ENCODE measurements at regions of chr7 and their contacts with region 1.

Region 1: GRCh38 chr7:7542251-7542835 is 6.7 kb upstream of the COL28A1 start:
- DNase-seq: no peak

Region 2: DNA sequence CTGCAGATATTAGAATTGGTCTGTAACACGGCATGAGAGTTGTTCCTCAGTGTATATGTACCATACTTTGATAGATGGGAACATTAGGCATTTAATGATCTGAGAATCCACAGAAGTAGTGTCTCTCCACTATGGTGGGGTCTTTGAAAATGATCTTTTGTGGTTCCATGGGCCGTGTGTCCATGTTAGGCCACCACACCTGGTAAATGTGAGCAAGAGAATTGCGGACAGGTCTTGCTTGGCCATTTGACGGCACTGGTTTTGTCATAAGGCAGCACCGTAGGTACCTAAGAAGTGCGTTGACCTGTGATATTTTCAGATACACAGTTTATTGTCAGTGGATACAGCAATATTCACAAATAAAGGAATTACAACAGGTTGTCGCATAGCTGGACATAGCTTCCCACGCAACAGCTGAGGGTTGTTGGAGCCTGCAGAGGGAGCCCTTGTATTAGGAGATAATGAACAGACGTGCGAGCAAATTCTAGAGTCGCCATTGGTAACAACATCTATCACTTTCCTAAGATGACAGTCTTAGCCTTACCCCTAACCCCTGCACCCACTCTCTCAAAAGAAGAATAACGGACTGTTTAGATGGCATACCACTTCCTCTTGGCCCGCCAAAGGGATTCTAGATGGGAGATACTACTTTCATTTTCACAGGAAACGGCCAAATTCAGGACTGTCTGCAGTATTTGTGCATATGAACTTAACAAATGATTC is 118.0 kb before region 1 on chr7:
- intact Hi-C with region 1: loop called (anchors 2 kb)
- DNase-seq: no peak

Measured in cardiac septum (tissue), 1 donor.